Ovary (tissue), 10 donors: ENCODE measurements at regions of chr12 and their contacts with region 1.

Region 1: GRCh38 chr12:50222275-50222795 is 55.2 kb upstream of the CERS5 start:
- DNase-seq: peak; percentile 57 to 80 (median 69)
- H3K4me3 ChIP-seq: peak overlapping the region; percentile 43
- H3K27ac ChIP-seq: peak overlapping the region; percentile 31 to 52
- H3K4me1 ChIP-seq: peaks cover 3% of the 10 kb centered on the region
- H3K27me3 ChIP-seq: no peaks in the 10 kb centered on the region
- CTCF ChIP-seq: peak in 2 of 3 donors; percentile 20 to 55
- EP300 ChIP-seq: no peak
- POLR2A ChIP-seq: peak; percentile 24

Region 2: DNA sequence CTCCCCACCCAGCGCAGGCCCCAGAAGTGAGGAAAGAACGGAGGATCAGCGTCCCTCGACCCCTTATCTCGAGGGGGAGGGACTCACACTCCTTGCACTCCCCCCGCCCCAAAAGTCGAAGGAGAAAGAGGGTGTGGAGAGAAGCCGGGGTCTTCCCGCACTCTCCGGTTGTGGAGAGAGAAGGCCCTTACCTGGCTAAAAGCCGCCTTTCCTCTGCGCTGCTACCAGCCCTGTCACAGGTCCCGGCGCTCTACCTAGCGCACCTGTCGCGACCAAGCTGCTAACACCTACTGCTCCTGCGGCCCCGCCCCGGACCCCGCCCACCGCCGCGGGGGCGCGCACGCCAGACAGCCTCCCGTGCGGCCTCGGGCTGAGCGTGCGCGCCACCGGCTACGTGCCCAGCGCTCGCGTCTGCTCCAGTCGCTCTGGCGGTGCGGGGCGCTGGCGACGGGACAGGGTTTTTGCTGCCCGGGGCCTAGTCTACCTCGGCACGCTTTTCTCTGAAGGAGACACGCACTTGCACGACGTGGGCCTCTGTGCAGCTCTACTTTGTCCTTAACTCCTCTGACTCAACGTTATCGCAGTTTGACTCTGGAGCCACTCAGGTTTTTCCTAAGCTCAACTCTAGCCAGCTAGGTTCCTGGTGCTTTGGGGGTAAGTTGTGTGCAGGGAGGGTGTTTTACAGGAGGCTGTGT is 61.0 kb after region 1 on chr12 and contains the start of gene LIMA1:
- intact Hi-C with region 1: loop called in 2 of 4 experiments (anchors 10 kb)
- DNase-seq: peak; percentile 85 to 94 (median 90)
- H3K4me3 ChIP-seq: peak within 1 kb of the TSS; percentile 86
- H3K27ac ChIP-seq: peak within 1 kb of the TSS; percentile 1 to 54
- H3K4me1 ChIP-seq: peaks cover 3% of the 10 kb centered on the region
- H3K27me3 ChIP-seq: no peaks in the 10 kb centered on the region
- CTCF ChIP-seq: peak in 2 of 3 donors; percentile 56 to 83
- EP300 ChIP-seq: no peak
- POLR2A ChIP-seq: peak; percentile 18
- total RNA-seq, gene LIMA1: 34.5 to 63.4 (median 45.2) TPM